ENCODE measurements at regions of chr3 and their contacts with region 1.

Region 1: DNA sequence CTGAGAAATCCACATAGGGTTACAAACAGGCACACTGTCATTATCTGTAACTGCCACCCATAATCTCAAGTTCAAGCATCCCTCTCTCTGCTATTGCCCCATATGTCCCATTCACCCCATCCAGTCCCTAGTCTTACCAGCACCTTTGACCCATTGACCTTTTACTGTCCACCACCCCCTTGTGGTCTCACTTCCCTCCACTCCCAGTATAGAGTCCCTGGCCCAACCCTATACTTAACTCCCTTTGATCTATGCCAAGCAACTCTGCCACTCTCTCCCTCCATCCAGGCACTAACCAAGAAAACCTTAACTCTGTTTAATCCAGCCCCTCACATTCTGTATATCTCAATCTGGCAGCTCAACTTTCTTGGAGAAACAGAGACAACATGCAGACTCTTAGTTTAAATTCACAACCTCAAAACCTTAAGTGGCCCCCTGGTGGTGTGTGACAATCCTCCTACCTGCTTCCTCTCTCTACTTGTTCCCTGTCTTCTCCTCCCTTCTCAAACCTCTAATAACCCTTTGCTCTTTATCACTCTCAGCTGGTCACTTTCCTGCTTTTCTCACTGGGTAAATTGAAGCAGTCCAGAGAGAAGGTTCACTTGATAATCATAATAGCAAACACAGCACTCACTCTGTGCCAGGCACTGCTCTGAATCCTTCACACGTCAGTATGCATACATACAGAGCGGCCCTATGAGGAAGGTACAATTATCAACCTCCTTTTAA is 162.7 kb downstream of the STT3B start:
- DNase-seq: no peak
- ATAC-seq: peak; percentile 82
- H3K4me3 ChIP-seq: no peak overlapping the region
- H3K27ac ChIP-seq: no peak overlapping the region
- H3K4me1 ChIP-seq: no peaks in the 10 kb centered on the region
- H3K27me3 ChIP-seq: no peaks in the 10 kb centered on the region
- CTCF ChIP-seq: peak; percentile 41 to 56 (median 50); a peak in 5 of 6 replicates
- EP300 ChIP-seq: no peak
- POLR2A ChIP-seq: no peak
- RAD21 ChIP-seq: peak; percentile 39

Region 2: GRCh38 chr3:31550452-31551251 is 144.8 kb before region 1 on chr3:
- CTCF ChIA-PET with region 1: interaction called, 8 read pairs
- POLR2A ChIA-PET with region 1: no interaction called
- RAD21 ChIA-PET with region 1: no interaction called
- SMC1A ChIA-PET with region 1: no interaction called
- in situ Hi-C with region 1: no loop called
- intact Hi-C with region 1: loop called (anchors 5 kb)
- DNase-seq: no peak
- ATAC-seq: peak; percentile 71
- H3K4me3 ChIP-seq: no peak overlapping the region
- H3K27ac ChIP-seq: no peak overlapping the region
- H3K4me1 ChIP-seq: no peaks in the 10 kb centered on the region
- H3K27me3 ChIP-seq: no peaks in the 10 kb centered on the region
- CTCF ChIP-seq: peak; percentile 48 to 62 (median 49); a peak in 5 of 6 replicates
- EP300 ChIP-seq: no peak
- POLR2A ChIP-seq: no peak
- RAD21 ChIP-seq: peak; percentile 51

Region 3: DNA sequence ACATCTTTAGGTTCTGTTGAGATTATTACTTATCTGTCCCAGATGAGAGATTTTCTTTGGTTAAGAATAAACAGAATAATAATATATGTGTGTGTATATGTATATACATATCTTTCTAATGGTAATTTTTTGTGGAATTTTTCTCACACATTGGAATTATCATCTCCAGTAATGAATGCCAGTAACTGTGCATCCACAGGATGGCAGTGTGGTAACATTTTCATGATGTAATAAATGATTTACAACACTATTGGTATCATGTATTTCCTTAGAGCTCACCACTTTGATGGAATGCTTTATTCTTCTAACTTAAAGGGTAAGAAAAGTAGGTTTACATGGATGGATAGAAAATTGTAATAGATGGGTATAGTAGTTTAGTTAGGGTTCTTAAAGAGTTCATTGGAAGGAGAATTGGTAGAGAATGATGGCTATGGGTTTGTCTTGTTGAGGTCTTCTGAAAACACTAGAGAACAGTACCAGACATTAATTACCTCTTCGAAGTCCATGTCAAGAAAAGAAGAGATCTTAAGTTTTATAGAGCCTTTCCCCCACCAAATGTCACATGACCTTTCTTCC is 84.7 kb before region 1 on chr3:
- CTCF ChIA-PET with region 1: interaction called, 6 read pairs
- POLR2A ChIA-PET with region 1: interaction called, 3 read pairs
- RAD21 ChIA-PET with region 1: no interaction called
- SMC1A ChIA-PET with region 1: interaction called, 3 read pairs
- in situ Hi-C with region 1: no loop called
- intact Hi-C with region 1: loop called (anchors 1 kb)
- DNase-seq: no peak
- ATAC-seq: peak; percentile 50; the same call in 2 of the 3 replicates
- H3K4me3 ChIP-seq: no peak overlapping the region
- H3K27ac ChIP-seq: no peak overlapping the region
- H3K4me1 ChIP-seq: no peaks in the 10 kb centered on the region
- H3K27me3 ChIP-seq: no peaks in the 10 kb centered on the region
- CTCF ChIP-seq: peak; percentile 24 to 40 (median 28); a peak in 3 of 6 replicates
- EP300 ChIP-seq: no peak
- POLR2A ChIP-seq: no peak
- RAD21 ChIP-seq: peak; percentile 33; the same call in 1 of the 2 replicates